ENCODE measurements at regions of chr2 and their contacts with region 1.

Region 1: GRCh38 chr2:190186238-190186637 is 123.7 kb upstream of the MSTN start:
- DNase-seq: no peak
- H3K4me3 ChIP-seq: no peak overlapping the region
- H3K27ac ChIP-seq: peak overlapping the region in 1 of 59 donors; percentile 99
- H3K27me3 ChIP-seq: no peaks in the 10 kb centered on the region
- CTCF ChIP-seq: no peak

Region 2: GRCh38 chr2:190082118-190082517 is 104.1 kb before region 1 on chr2:
- intact Hi-C with region 1: no loop called
- DNase-seq: no peak
- H3K4me3 ChIP-seq: no peak overlapping the region
- H3K27ac ChIP-seq: no peak overlapping the region
- H3K27me3 ChIP-seq: no peaks in the 10 kb centered on the region
- CTCF ChIP-seq: no peak

Region 3: DNA sequence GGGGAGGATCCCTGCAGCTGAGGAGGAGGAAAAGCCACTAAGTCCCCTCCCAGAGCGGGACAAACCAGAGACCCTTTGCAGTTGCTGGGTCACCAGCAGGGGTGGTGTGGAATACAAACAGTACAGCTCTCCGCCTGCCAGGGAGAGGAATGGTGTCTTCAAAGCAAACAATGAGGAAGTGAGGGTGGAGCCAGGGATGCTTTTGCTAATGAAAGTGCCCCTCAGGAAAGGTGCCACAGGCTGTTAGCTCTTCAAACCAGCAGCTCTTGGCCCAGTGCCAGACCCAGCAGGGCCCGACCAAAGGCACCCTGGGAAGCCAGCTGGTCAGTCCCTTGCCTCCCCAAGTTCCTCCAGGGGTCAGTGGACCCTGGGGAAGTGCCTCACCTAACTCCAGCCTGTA is 30.6 kb after region 1 on chr2:
- intact Hi-C with region 1: no loop called
- DNase-seq: peak in 1 of 10 donors; percentile 7
- H3K4me3 ChIP-seq: no peak overlapping the region
- H3K27ac ChIP-seq: no peak overlapping the region
- H3K27me3 ChIP-seq: no peaks in the 10 kb centered on the region
- CTCF ChIP-seq: no peak

Region 4: DNA sequence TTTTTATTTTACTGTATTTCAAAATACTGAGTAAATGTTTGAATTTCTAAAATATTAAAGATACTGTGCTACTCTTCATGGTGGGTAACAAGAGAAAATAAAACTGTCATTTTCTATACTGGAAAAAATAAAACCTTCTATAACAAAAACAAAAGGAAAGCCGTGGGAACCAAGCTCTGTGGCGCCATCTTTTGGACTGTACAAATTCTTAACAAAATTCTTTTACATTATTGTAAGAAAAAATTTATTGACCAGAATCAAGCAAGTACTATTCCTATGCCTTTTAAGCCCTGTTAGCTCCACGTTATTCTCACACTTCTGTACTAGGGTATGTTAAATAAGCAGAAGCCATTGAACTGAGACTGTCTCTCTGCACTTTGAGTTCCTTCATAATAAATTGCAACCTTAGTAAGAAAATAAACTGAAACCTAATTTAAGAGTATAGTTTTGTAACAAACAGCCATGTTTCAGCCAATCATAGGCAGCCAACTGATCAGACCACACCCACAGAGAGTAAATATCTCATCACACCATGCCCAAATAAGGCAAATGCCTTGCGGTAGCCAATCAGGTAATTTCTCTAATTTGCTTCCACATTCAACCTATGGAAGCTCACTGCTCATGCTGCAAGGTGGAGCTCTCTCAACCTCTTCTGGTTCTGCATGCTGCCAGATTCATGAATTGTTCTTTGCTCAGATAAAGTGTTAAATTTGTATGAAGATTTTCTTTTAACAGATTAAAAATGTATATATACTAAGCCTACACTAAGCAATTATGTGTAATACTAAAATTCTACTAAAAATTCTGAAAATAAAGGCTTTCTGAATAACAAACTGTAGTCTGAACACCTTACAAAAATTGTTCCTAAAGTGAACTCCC is 91.2 kb after region 1 on chr2:
- intact Hi-C with region 1: loop called in 1 of 2 experiments (anchors 5 kb)
- DNase-seq: no peak
- H3K4me3 ChIP-seq: no peak overlapping the region
- H3K27ac ChIP-seq: peak overlapping the region in 15 of 59 donors; percentile 0 to 75 (median 26)
- H3K27me3 ChIP-seq: no peaks in the 10 kb centered on the region
- CTCF ChIP-seq: peak in 51 of 56 donors; percentile 25 to 74 (median 53)